Activated CD4-positive, alpha-beta memory T cell treated with anti-CD3 and anti-CD28 coated beads for 36 hours (primary cell): ENCODE measurements at regions of chr3 and their contacts with region 1.

Region 1: DNA sequence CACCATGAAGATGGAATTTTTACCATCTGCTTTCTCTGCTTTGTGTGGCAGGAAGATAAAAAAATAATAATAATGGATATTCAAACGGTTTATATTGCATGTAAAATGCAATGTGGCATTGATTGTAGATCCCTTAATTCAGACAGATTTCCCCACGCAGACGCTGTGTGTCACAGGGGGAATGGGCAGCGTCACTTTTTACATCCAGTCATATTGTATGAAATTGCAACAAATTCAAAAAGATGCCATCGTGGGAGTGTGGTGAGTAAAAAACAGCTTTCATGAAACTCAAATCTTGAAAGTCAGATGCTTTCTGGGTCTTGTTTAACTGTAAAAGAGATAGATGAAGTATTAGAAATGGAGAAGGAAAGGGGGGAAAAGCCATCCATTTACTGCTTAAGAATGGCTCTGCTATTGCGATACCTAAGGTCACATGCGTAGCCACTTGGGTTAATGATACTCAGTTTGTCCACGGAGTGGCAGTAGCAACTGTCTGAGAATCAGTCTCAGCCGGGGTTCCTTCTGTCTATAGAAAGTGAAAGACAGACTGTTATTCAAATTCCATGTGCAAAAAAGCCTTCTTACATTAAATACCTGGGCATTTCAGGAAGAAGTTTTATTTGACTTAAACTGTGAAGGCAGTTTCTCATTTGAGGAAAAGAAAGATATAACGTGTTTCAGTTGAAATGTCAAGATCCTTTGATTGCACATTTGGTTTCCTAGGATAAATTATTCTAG is 28.5 kb downstream of the BTD start:
- DNase-seq: peak; percentile 71
- H3K4me3 Mint-ChIP-seq: peak overlapping the region; percentile 22
- H3K27ac Mint-ChIP-seq: peak overlapping the region; percentile 73
- H3K4me1 Mint-ChIP-seq: peaks cover 50% of the 10 kb centered on the region
- H3K27me3 Mint-ChIP-seq: no peaks in the 10 kb centered on the region

Region 2: GRCh38 chr3:15647611-15648167 is 17.7 kb after region 1 on chr3:
- CTCF ChIA-PET with region 1: interaction called, 4 read pairs
- POLR2A ChIA-PET with region 1: no interaction called
- intact Hi-C with region 1: loop called (anchors 2 kb)
- DNase-seq: peak; percentile 82
- H3K4me3 Mint-ChIP-seq: peak overlapping the region; percentile 17
- H3K27ac Mint-ChIP-seq: peak overlapping the region; percentile 69
- H3K4me1 Mint-ChIP-seq: peaks cover 37% of the 10 kb centered on the region
- H3K27me3 Mint-ChIP-seq: peaks cover 3% of the 10 kb centered on the region

Region 3: DNA sequence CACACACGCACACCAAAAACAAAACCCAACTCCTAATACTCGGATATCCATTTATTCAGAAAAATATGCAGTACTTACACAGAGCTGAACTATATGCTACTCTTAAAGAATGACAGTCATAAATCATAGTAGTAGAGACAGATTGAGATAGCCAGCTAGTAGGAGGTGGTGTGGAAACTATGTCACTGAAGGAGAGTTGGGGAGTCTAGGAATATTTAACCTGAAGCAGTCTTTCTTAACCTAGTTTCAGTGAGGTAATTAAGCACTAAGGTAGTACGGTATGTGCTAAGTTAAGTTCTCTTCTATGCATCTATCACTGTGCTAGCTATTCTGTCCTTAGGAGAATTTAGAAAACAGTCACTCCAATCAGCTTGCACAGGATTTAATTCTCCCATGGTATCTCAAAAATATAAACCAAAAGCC is 113.6 kb after region 1 on chr3:
- CTCF ChIA-PET with region 1: no interaction called
- POLR2A ChIA-PET with region 1: no interaction called
- intact Hi-C with region 1: loop called (anchors 2 kb)
- DNase-seq: no peak
- H3K4me3 Mint-ChIP-seq: no peak overlapping the region
- H3K27ac Mint-ChIP-seq: no peak overlapping the region
- H3K4me1 Mint-ChIP-seq: peaks cover 40% of the 10 kb centered on the region
- H3K27me3 Mint-ChIP-seq: no peaks in the 10 kb centered on the region

Region 4: GRCh38 chr3:15805756-15806266 is 175.8 kb after region 1 on chr3:
- CTCF ChIA-PET with region 1: interaction called, 10 read pairs
- POLR2A ChIA-PET with region 1: no interaction called
- intact Hi-C with region 1: no loop called
- DNase-seq: no peak
- H3K4me3 Mint-ChIP-seq: no peak overlapping the region
- H3K27ac Mint-ChIP-seq: peak overlapping the region; percentile 23
- H3K4me1 Mint-ChIP-seq: peaks cover 72% of the 10 kb centered on the region
- H3K27me3 Mint-ChIP-seq: no peaks in the 10 kb centered on the region

Region 5: GRCh38 chr3:15859507-15860013 is 229.5 kb after region 1 on chr3:
- CTCF ChIA-PET with region 1: no interaction called
- POLR2A ChIA-PET with region 1: no interaction called
- intact Hi-C with region 1: loop called (anchors 2 kb)
- DNase-seq: peak; percentile 82
- H3K4me3 Mint-ChIP-seq: peak overlapping the region; percentile 96
- H3K27ac Mint-ChIP-seq: peak overlapping the region; percentile 91
- H3K4me1 Mint-ChIP-seq: peaks cover 21% of the 10 kb centered on the region
- H3K27me3 Mint-ChIP-seq: no peaks in the 10 kb centered on the region

Region 6: GRCh38 chr3:16247276-16248061 is 617.4 kb after region 1 on chr3:
- CTCF ChIA-PET with region 1: no interaction called
- POLR2A ChIA-PET with region 1: no interaction called
- intact Hi-C with region 1: loop called (anchors 1 kb)
- DNase-seq: peak; percentile 84
- H3K4me3 Mint-ChIP-seq: no peak overlapping the region
- H3K27ac Mint-ChIP-seq: no peak overlapping the region
- H3K4me1 Mint-ChIP-seq: peaks cover 17% of the 10 kb centered on the region
- H3K27me3 Mint-ChIP-seq: no peaks in the 10 kb centered on the region